ENCODE measurements at regions of chr9 and their contacts with region 1.

Region 1: DNA sequence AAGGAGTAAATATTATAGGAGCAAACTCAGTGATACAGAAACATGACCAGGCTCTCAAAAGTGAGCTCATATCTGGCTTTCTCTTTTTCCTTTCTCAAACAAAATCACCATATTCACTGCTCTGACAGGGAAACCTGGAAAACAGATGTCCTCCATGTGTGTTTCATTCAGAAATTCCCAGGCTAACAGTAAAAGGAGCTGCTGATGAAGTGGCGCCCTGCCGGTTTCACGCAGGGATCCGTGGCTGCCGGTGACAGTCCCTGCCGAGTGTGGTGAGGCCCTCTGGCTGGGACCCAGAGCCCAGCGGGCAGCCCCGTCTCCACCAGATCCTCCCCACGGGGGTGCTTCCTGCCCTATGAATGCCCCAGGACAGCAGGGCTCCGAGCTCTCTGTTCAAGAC is 208.1 kb downstream of the GNA14 start:
- DNase-seq: peak in 2 of 3 donors; percentile 43 to 64
- ATAC-seq: no peak
- H3K4me3 ChIP-seq: no peak overlapping the region
- H3K27ac ChIP-seq: no peak overlapping the region
- H3K4me1 ChIP-seq: no peaks in the 10 kb centered on the region
- H3K27me3 ChIP-seq: no peaks in the 10 kb centered on the region

Region 2: GRCh38 chr9:77731930-77732329 is 291.9 kb after region 1 on chr9:
- intact Hi-C with region 1: loop called in 1 of 4 experiments (anchors 10 kb)
- DNase-seq: no peak
- ATAC-seq: no peak
- H3K4me3 ChIP-seq: no peak overlapping the region
- H3K27ac ChIP-seq: no peak overlapping the region
- H3K4me1 ChIP-seq: no peaks in the 10 kb centered on the region
- H3K27me3 ChIP-seq: no peaks in the 10 kb centered on the region